Transverse colon (tissue), 4 donors: ENCODE measurements at regions of chr6 and their contacts with region 1.

Region 1: GRCh38 chr6:169253337-169254238 is at the start of gene THBS2:
- DNase-seq: peak; percentile 24
- H3K4me3 ChIP-seq: peak within 1 kb of the TSS in 3 of 4 donors; percentile 7 to 35 (median 13)
- H3K27ac ChIP-seq: peak within 1 kb of the TSS; percentile 16 to 77 (median 43)
- H3K4me1 ChIP-seq: peaks cover 0 to 6% (median 0%) of the 10 kb centered on the region in 4 donors
- H3K27me3 ChIP-seq: peaks cover 43% of the 10 kb centered on the region
- CTCF ChIP-seq: no peak
- EP300 ChIP-seq: no peak
- POLR2A ChIP-seq: peak; percentile 20
- total RNA-seq, gene THBS2: 11.5 to 25.5 (median 18.1) TPM

Region 2: GRCh38 chr6:168677834-168678476 is 575.6 kb before region 1 on chr6:
- in situ Hi-C with region 1: no loop called
- intact Hi-C with region 1: loop called (anchors 5 kb)
- DNase-seq: no peak
- H3K4me3 ChIP-seq: no peak overlapping the region
- H3K27ac ChIP-seq: no peak overlapping the region
- H3K4me1 ChIP-seq: peaks cover 0 to 3% (median 0%) of the 10 kb centered on the region in 4 donors
- H3K27me3 ChIP-seq: no peaks in the 10 kb centered on the region
- CTCF ChIP-seq: no peak
- EP300 ChIP-seq: no peak
- POLR2A ChIP-seq: no peak